GM13977 (cell line): ENCODE measurements at regions of chr7 and their contacts with region 1.

Region 1: GRCh38 chr7:38321515-38321944 is 48.1 kb upstream of the TARP start:
- DNase-seq: no peak
- CTCF ChIP-seq: no peak

Region 2: DNA sequence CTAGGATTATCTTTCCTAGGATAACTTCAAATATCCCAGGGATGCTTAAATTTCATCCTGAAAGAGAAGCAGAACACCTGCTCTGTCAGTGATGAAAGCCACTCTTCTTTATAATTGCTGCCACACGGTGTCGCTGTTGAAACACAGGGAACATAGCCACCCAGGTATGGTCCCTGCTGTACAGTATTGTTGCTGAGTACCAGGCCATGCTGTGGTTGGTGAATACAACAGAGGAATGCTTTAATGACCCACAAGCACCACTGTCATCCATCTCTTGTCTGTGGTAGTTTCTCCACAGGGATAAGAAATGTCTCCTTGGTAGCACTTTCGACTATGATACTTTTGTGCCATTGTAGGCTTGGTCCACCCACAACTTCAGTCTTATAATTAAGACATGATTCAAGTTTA is 214.0 kb before region 1 on chr7:
- in situ Hi-C with region 1: loop called (anchors 10 kb)
- DNase-seq: peak; percentile 52
- CTCF ChIP-seq: peak; percentile 81